Endothelial cell of umbilical vein (primary cell): ENCODE measurements at regions of chr12 and their contacts with region 1.

Region 1: DNA sequence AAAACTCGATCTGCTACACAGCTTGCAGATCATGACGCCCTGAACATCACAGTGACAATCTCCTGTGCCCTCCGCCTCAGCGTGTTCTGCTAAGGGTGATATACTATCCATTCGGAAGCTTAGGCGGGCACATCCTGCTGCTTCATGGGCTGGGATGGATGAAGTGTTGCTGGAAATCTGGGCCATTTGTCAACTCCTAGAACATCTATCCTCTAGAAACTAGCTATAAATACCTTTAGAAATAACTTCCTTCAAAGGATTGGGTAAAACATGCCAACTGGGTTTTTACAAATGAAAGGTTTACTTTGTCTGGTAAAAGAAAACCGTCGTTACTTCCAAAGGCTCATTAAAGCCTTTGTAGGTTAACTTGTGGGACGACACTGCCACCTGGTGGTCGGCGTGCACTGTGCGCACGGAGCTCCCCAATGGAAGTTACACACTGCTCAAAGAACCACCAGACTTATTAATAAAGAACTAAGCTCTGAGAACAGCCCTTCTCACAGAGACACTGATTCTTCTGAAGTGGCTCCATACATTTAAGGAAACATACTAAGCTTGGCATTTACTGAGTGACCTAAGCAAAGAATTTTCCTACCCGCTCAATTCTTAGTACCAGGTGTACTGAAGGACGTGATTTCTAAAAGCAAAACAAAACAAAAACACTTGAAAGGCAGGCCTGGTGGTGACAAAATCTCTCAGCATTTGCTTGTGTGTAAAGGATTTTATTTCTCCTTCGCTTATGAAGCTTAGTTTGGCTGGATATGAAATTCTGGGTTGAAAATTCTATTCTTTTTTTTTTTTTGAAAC is 21.6 kb upstream of the CACNA2D4 start:
- DNase-seq: peak; percentile 85
- H3K4me3 ChIP-seq: no peak overlapping the region
- H3K27ac ChIP-seq: no peak overlapping the region
- H3K4me1 ChIP-seq: no peaks in the 10 kb centered on the region
- H3K27me3 ChIP-seq: no peaks in the 10 kb centered on the region
- CTCF ChIP-seq: peak; percentile 91 to 98
- POLR2A ChIP-seq: no peak

Region 2: DNA sequence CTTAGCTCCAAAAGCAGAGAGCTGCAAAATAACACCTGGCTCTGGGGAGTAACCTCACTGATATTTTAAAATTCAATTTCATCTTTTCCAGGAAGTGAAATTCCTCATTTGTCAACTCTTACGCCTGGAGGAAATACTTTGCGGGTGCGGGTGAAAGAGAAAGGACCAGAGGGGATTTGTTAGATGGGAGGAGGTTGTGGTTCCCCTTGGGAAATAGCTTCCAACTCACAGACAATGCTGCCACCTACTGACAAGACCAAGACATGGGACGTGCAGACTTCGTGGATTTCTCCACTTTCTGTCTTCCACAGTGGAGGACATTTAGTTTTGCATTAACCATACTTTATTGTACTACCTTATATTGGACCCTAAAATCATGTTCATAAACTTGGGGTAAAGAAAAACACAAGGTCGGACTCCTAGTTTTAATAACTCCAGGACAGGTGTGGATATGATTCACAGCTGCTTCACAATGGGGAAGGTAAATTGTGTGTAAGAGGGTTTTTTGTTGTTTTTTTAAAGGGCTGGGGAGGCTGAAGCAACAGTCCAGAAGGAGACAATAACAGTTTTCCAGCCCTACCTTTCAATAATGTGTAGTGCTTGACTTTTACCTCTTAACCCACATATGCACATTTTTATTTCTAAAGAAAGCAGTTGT is 356.5 kb before region 1 on chr12:
- CTCF ChIA-PET with region 1: no interaction called
- POLR2A ChIA-PET with region 1: no interaction called
- dilution Hi-C with region 1: no loop called
- intact Hi-C with region 1: no loop called
- DNase-seq: peak; percentile 80
- H3K4me3 ChIP-seq: no peak overlapping the region
- H3K27ac ChIP-seq: no peak overlapping the region
- H3K4me1 ChIP-seq: peaks cover 6% of the 10 kb centered on the region
- H3K27me3 ChIP-seq: no peaks in the 10 kb centered on the region
- CTCF ChIP-seq: peak; percentile 74 to 79
- POLR2A ChIP-seq: no peak

Region 3: GRCh38 chr12:1650260-1650977 is 289.6 kb before region 1 on chr12:
- CTCF ChIA-PET with region 1: interaction called, 69 read pairs
- POLR2A ChIA-PET with region 1: no interaction called
- dilution Hi-C with region 1: loop called (anchors 25 kb)
- intact Hi-C with region 1: loop called (anchors 1 kb)
- DNase-seq: no peak
- H3K4me3 ChIP-seq: no peak overlapping the region
- H3K27ac ChIP-seq: no peak overlapping the region
- H3K4me1 ChIP-seq: no peaks in the 10 kb centered on the region
- H3K27me3 ChIP-seq: peaks cover 24 to 27% of the 10 kb centered on the region in 2 experiments
- CTCF ChIP-seq: no peak
- POLR2A ChIP-seq: no peak

Region 4: GRCh38 chr12:1804545-1805332 is 135.3 kb before region 1 on chr12:
- CTCF ChIA-PET with region 1: interaction called, 87 read pairs
- POLR2A ChIA-PET with region 1: no interaction called
- dilution Hi-C with region 1: no loop called
- intact Hi-C with region 1: no loop called
- DNase-seq: peak; percentile 85
- H3K4me3 ChIP-seq: no peak overlapping the region
- H3K27ac ChIP-seq: no peak overlapping the region
- H3K4me1 ChIP-seq: no peaks in the 10 kb centered on the region
- H3K27me3 ChIP-seq: no peaks in the 10 kb centered on the region
- CTCF ChIP-seq: no peak
- POLR2A ChIP-seq: peak; percentile 67

Region 5: DNA sequence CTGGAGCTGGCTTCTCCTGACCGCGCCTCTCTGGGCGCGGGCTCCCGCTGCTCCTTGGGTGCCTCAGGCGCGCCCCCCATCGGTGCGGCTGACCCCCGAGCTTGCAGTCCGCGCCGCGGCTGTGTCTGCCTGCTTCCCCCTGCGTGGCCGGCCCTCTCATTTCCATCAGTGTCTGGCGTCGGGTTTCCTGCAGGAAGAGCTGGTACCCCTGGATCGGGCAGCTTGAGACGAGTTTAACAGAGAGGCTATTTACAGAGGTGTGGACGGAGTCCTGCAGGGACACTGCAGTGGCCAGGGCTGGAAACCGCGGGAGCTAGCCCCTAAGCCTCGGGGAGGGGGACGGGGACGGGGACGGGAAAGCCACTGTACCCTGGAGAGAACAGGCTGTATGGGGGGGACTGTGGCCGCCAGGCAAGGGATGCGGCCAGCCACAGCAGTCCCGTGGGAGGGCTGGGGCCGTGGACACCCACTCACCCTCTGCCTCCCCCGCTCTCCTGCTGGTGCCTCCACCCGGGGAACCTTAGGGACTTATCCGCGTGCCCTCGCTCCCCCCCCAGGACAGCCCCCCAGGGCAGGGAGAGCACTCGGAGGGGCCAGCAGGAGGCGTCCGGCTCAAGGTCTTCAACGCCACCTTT is 17.8 kb before region 1 on chr12:
- CTCF ChIA-PET with region 1: interaction called, 17 read pairs
- POLR2A ChIA-PET with region 1: no interaction called
- dilution Hi-C with region 1: no loop called
- intact Hi-C with region 1: no loop called
- DNase-seq: no peak
- H3K4me3 ChIP-seq: no peak overlapping the region
- H3K27ac ChIP-seq: no peak overlapping the region
- H3K4me1 ChIP-seq: no peaks in the 10 kb centered on the region
- H3K27me3 ChIP-seq: peaks cover 3 to 10% of the 10 kb centered on the region in 2 experiments
- CTCF ChIP-seq: no peak
- POLR2A ChIP-seq: no peak

Region 6: DNA sequence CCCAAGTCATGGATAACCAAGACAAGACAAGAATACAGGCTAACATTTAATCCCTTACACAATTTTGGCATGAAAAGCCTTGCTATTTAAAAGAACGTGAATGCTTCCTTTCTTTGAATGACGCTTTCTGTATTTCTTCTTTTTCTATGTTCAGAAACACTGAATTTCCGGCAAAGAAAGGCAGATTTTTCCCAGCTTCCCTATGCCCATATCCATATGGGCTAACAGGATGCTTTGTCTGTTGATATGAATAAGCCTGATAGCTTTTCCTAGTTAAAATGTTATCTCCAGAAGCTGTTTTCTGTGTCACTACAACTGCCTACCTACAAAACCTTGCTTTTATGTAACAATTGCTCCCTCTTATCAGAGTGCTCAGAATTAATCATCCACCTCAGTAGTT is 16.7 kb after region 1 on chr12:
- CTCF ChIA-PET with region 1: interaction called, 28 read pairs
- POLR2A ChIA-PET with region 1: no interaction called
- dilution Hi-C with region 1: no loop called
- intact Hi-C with region 1: no loop called
- DNase-seq: no peak
- H3K4me3 ChIP-seq: no peak overlapping the region
- H3K27ac ChIP-seq: no peak overlapping the region
- H3K4me1 ChIP-seq: no peaks in the 10 kb centered on the region
- H3K27me3 ChIP-seq: no peaks in the 10 kb centered on the region
- CTCF ChIP-seq: no peak
- POLR2A ChIP-seq: no peak

Region 7: GRCh38 chr12:2583091-2583497 is 643.1 kb after region 1 on chr12:
- CTCF ChIA-PET with region 1: interaction called, 18 read pairs
- POLR2A ChIA-PET with region 1: no interaction called
- dilution Hi-C with region 1: no loop called
- intact Hi-C with region 1: loop called (anchors 2 kb)
- DNase-seq: peak; percentile 20
- H3K4me3 ChIP-seq: no peak overlapping the region
- H3K27ac ChIP-seq: no peak overlapping the region
- H3K4me1 ChIP-seq: no peaks in the 10 kb centered on the region
- H3K27me3 ChIP-seq: peaks cover 6% of the 10 kb centered on the region in 2 experiments
- CTCF ChIP-seq: peak; percentile 78 to 85
- POLR2A ChIP-seq: no peak